Activated naive CD4-positive, alpha-beta T cell treated with anti-CD3 and anti-CD28 coated beads for 36 hours (primary cell): ENCODE measurements at regions of chr1 and their contacts with region 1.

Region 1: GRCh38 chr1:107963601-107964335 is 1.2 kb downstream of the VAV3 start:
- DNase-seq: peak; percentile 73
- H3K4me3 Mint-ChIP-seq: peak overlapping the region; percentile 87
- H3K27ac Mint-ChIP-seq: peak overlapping the region; percentile 96
- H3K4me1 Mint-ChIP-seq: peaks cover 25% of the 10 kb centered on the region
- H3K27me3 Mint-ChIP-seq: no peaks in the 10 kb centered on the region

Region 2: DNA sequence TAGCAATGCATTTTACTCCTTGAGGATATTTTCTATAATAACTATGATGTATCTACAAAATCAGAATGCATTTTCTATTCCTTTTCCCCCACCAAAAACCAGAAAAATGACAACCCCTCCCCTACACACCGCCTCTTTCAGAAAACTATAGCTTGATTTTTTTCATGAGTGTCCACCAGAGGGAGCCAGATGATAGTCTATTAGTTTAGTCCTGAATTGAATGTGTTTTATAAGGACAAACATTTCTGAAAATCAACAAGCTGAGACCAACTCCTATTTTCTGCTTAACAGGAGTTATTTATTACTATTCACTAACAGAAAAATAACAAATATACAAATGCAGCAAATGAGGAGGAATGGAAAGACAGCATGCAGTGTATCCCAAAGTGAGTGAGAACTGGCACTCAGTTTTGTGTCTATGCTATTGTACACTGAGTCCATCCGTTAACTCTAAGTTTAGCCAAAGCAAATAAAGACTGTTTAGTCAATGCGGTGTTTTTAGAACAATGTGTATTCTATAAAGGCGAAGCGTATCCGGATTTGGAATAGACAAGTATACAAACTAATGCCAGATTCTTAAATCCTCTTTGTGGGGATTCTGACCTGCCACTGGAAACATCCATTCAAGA is 181.4 kb before region 1 on chr1:
- CTCF ChIA-PET with region 1: interaction called, 22 read pairs
- intact Hi-C with region 1: loop called (anchors 1 kb)
- DNase-seq: peak; percentile 59
- H3K4me3 Mint-ChIP-seq: no peak overlapping the region
- H3K27ac Mint-ChIP-seq: no peak overlapping the region
- H3K4me1 Mint-ChIP-seq: peaks cover 23% of the 10 kb centered on the region
- H3K27me3 Mint-ChIP-seq: no peaks in the 10 kb centered on the region

Region 3: GRCh38 chr1:107897438-107898345 is 66.1 kb before region 1 on chr1:
- CTCF ChIA-PET with region 1: interaction called, 5 read pairs
- intact Hi-C with region 1: loop called (anchors 1 kb)
- DNase-seq: no peak
- H3K4me3 Mint-ChIP-seq: peak overlapping the region; percentile 25
- H3K27ac Mint-ChIP-seq: peak overlapping the region; percentile 78
- H3K4me1 Mint-ChIP-seq: peaks cover 40% of the 10 kb centered on the region
- H3K27me3 Mint-ChIP-seq: no peaks in the 10 kb centered on the region

Region 4: GRCh38 chr1:108000620-108001111 is 36.9 kb after region 1 on chr1:
- CTCF ChIA-PET with region 1: no interaction called
- intact Hi-C with region 1: no loop called
- DNase-seq: no peak
- H3K4me3 Mint-ChIP-seq: no peak overlapping the region
- H3K27ac Mint-ChIP-seq: no peak overlapping the region
- H3K4me1 Mint-ChIP-seq: no peaks in the 10 kb centered on the region
- H3K27me3 Mint-ChIP-seq: no peaks in the 10 kb centered on the region

Region 5: GRCh38 chr1:108041360-108042142 is 77.8 kb after region 1 on chr1:
- CTCF ChIA-PET with region 1: interaction called, 5 read pairs
- intact Hi-C with region 1: loop called (anchors 1 kb)
- DNase-seq: peak; percentile 43
- H3K4me3 Mint-ChIP-seq: peak overlapping the region; percentile 14
- H3K27ac Mint-ChIP-seq: peak overlapping the region; percentile 17
- H3K4me1 Mint-ChIP-seq: peaks cover 36% of the 10 kb centered on the region
- H3K27me3 Mint-ChIP-seq: no peaks in the 10 kb centered on the region

Region 6: GRCh38 chr1:108079440-108080025 is 115.8 kb after region 1 on chr1:
- CTCF ChIA-PET with region 1: interaction called, 3 read pairs
- intact Hi-C with region 1: loop called (anchors 1 kb)
- DNase-seq: peak; percentile 82
- H3K4me3 Mint-ChIP-seq: no peak overlapping the region
- H3K27ac Mint-ChIP-seq: peak overlapping the region; percentile 84
- H3K4me1 Mint-ChIP-seq: peaks cover 66% of the 10 kb centered on the region
- H3K27me3 Mint-ChIP-seq: no peaks in the 10 kb centered on the region

Region 7: GRCh38 chr1:108125312-108126138 is 161.8 kb after region 1 on chr1:
- CTCF ChIA-PET with region 1: interaction called, 17 read pairs
- intact Hi-C with region 1: loop called (anchors 1 kb)
- DNase-seq: peak; percentile 80
- H3K4me3 Mint-ChIP-seq: no peak overlapping the region
- H3K27ac Mint-ChIP-seq: no peak overlapping the region
- H3K4me1 Mint-ChIP-seq: peaks cover 3% of the 10 kb centered on the region
- H3K27me3 Mint-ChIP-seq: no peaks in the 10 kb centered on the region